ENCODE measurements at regions of chr1 and their contacts with region 1.

Region 1: DNA sequence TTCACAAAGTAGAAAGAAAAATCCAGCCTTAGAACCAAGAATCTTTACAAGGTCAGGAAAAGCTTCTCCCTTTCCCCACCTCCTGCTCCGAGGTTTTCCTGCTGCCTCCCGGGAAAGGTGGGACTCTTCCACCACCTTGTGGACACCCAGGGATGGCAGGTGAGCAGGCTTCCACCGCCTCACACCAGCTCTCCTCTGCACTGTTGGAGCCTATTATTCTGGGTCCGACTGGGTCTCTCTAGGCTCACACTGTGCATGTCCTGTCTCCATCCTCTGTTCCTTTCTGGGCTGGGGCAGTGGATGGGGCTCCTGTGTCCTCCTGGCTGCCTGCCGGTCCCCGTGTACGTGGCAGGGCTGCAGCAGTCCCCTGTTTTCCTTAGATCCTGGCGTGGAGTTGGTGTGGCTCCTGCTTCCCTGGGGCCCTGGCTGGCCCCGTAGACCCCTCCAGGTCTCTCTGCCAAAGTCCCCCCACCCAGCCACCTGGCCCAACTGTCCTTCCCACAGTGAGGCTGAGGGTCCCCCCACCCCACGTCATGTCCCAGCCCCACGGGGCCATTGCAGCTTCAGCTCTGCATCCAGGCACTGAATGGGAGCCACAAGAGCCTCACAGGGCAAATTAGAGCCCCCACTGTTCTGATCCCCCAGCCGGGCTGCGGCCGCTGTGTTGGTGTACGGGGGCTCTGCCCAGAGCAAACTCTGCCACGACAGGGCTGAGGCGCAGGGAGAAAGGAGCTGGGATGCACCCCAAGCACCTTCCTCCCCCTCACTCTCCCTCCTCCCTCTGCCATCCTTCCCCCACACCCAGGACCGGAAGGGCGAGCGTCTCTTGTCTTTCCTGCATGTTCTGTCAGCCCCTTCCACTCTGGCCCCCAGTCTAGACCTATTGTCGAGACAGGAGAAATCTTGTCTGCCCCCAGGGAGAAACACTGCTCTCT is 3.3 kb upstream of the SLC45A1 start:
- DNase-seq: peak; percentile 76 to 89 (median 82)
- ATAC-seq: peak; percentile 65 to 90 (median 82)
- H3K4me3 ChIP-seq: no peak overlapping the region
- H3K27ac ChIP-seq: peak overlapping the region in 2 of 4 donors; percentile 12 to 66
- H3K4me1 ChIP-seq: peaks cover 12 to 29% (median 16%) of the 10 kb centered on the region in 3 donors
- H3K27me3 ChIP-seq: no peaks in the 10 kb centered on the region
- CTCF ChIP-seq: peak; percentile 77 to 85 (median 80)

Region 2: DNA sequence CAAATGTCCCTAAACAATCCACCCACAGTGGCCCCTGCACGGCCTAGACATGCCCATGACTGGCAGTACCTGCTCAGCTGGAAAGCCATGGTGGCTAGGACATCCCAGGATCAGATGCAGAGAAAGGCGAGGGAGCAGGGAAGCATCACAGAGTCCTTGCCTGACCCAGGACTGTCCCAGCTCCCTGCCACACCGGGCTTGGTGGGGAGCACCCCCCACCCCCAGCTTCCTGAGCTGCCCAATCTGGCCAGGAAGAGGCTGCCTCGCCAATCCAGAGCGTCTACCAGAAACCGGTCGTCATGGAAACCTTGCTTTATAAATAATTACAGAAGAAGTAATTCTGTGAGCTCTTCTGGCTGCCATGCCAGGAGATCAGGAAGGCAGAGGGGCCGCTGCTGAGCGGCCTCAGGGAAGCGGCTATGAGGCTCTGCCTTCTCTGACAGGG is 1955.8 kb before region 1 on chr1:
- intact Hi-C with region 1: no loop called
- DNase-seq: peak in 4 of 6 donors; percentile 28 to 65 (median 32)
- ATAC-seq: peak; percentile 4 to 49 (median 14)
- H3K4me3 ChIP-seq: no peak overlapping the region
- H3K27ac ChIP-seq: peak overlapping the region; percentile 68 to 87 (median 78)
- H3K4me1 ChIP-seq: peaks cover 13 to 30% (median 26%) of the 10 kb centered on the region in 3 donors
- H3K27me3 ChIP-seq: no peaks in the 10 kb centered on the region
- CTCF ChIP-seq: no peak

Region 3: GRCh38 chr1:8169364-8170058 is 145.1 kb before region 1 on chr1:
- intact Hi-C with region 1: loop called in 1 of 3 experiments (anchors 10 kb)
- DNase-seq: peak in 4 of 6 donors; percentile 52 to 79 (median 72)
- ATAC-seq: peak; percentile 82 to 92 (median 88)
- H3K4me3 ChIP-seq: no peak overlapping the region
- H3K27ac ChIP-seq: peak overlapping the region; percentile 63 to 92 (median 84)
- H3K4me1 ChIP-seq: peaks cover 23% of the 10 kb centered on the region in 3 donors
- H3K27me3 ChIP-seq: no peaks in the 10 kb centered on the region
- CTCF ChIP-seq: no peak

Region 4: GRCh38 chr1:8396786-8397406 is 82.3 kb after region 1 on chr1:
- intact Hi-C with region 1: no loop called
- DNase-seq: no peak
- ATAC-seq: peak in 3 of 4 donors; percentile 55 to 63 (median 61)
- H3K4me3 ChIP-seq: no peak overlapping the region
- H3K27ac ChIP-seq: peak overlapping the region in 2 of 4 donors; percentile 5 to 50
- H3K4me1 ChIP-seq: peaks cover 0 to 41% (median 17%) of the 10 kb centered on the region in 3 donors
- H3K27me3 ChIP-seq: no peaks in the 10 kb centered on the region
- CTCF ChIP-seq: no peak

Region 5: DNA sequence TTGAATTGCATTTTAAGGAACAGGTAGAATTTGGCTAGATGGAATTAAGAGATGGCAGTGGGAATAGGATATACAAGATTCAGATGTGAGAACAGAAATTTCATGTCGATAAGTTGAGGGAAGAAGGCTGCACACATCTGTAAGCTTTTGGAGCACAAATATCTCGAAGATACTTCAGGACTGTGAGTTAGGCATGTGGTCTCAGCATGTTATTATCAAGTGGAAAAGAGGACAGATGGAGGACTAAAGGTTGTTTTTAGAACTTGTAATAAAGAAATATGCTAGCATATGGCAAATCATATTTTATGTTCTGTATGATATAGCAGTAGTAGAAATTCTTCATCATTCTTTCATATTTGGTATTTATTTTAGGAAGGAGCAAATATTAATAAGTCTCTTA is 1957.3 kb after region 1 on chr1:
- intact Hi-C with region 1: no loop called
- DNase-seq: no peak
- ATAC-seq: peak in 2 of 4 donors; percentile 11 to 58
- H3K4me3 ChIP-seq: no peak overlapping the region
- H3K27ac ChIP-seq: no peak overlapping the region
- H3K4me1 ChIP-seq: peaks cover 7 to 13% (median 11%) of the 10 kb centered on the region in 3 donors
- H3K27me3 ChIP-seq: no peaks in the 10 kb centered on the region
- CTCF ChIP-seq: no peak